Ascending aorta (tissue), 2 donors: ENCODE measurements at regions of chr12 and their contacts with region 1.

Region 1: GRCh38 chr12:116277393-116278278 is at the start of gene MED13L:
- DNase-seq: peak; percentile 46 to 93
- H3K4me3 ChIP-seq: peak within 1 kb of the TSS; percentile 89 to 95
- H3K27ac ChIP-seq: peak within 1 kb of the TSS; percentile 87 to 95
- H3K4me1 ChIP-seq: peaks cover 4 to 17% of the 10 kb centered on the region in 2 donors
- H3K27me3 ChIP-seq: no peaks in the 10 kb centered on the region
- CTCF ChIP-seq: peak; percentile 17 to 55 (median 39)
- total RNA-seq, gene MED13L: 117 TPM

Region 2: DNA sequence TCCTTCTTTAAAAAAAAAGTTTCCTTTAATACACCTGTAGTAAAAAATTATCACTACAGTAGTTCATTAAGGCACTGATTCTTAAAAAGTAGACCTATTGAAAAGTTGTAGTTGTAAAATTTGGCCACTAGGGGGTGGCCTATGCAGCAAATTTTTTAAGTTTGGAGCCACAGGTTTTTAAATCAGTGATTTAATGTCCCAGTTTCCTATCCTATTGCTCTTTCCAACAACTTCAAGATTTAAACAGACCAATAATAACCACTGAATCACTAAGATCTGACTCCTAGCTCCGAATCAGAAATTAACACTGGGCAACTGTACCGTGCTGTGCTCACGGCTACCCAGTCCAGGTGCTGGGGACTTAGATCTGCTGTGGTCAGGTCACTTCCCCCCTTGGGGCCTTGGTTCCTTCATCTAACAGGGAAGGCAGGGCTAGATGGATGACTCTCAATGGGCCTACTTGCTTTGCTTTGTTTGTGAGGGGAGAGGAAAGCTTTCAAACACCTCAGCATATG is 279.5 kb before region 1 on chr12:
- intact Hi-C with region 1: loop called (anchors 2 kb)
- DNase-seq: no peak
- H3K4me3 ChIP-seq: no peak overlapping the region
- H3K27ac ChIP-seq: peak overlapping the region in 1 of 2 donors; percentile 22
- H3K4me1 ChIP-seq: peaks cover 0 to 10% of the 10 kb centered on the region in 2 donors
- H3K27me3 ChIP-seq: no peaks in the 10 kb centered on the region
- CTCF ChIP-seq: peak; percentile 65 to 72 (median 69)

Region 3: GRCh38 chr12:116222358-116222757 is 55.3 kb before region 1 on chr12:
- intact Hi-C with region 1: no loop called
- DNase-seq: peak in 1 of 2 donors; percentile 88
- H3K4me3 ChIP-seq: no peak overlapping the region
- H3K27ac ChIP-seq: peak overlapping the region in 1 of 2 donors; percentile 5
- H3K4me1 ChIP-seq: peaks cover 5 to 42% of the 10 kb centered on the region in 2 donors
- H3K27me3 ChIP-seq: no peaks in the 10 kb centered on the region
- CTCF ChIP-seq: no peak

Region 4: DNA sequence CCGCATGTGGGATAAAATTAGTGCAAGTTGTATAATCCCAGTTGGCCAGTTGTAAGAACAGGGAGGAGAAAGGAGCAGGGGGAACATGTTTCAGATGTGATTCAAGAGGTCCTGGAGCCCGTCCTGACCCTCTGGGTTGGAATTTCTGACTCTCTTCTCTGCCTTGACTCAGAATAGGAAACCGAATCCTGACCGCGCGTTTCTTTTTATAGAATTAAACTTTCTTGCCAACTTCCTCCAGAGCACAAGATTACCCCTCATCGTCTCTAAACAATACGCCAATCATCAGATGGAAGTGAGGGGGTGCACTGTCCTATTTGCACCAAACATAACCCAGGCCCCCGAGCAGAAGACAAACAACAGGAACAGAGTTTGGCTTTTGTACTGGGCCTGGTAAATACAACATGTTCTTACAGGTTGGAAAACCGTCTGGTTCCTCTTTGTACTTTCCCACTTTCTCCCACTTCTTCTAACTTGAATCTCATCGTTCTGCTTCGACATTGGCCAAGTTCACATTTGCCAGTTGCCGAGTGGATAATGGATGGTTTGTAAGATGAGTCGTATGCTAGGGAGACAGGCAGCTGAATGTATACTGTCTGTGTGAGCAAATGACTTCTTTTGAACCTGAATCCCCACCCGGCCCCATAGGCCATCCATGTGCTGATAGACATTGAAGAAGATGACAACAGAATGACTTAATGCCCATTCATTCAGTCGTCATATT is 42.4 kb after region 1 on chr12:
- intact Hi-C with region 1: loop called (anchors 1 kb)
- DNase-seq: peak; percentile 53 to 95
- H3K4me3 ChIP-seq: peak overlapping the region; percentile 17 to 24
- H3K27ac ChIP-seq: peak overlapping the region; percentile 87 to 89
- H3K4me1 ChIP-seq: peaks cover 11 to 25% of the 10 kb centered on the region in 2 donors
- H3K27me3 ChIP-seq: no peaks in the 10 kb centered on the region
- CTCF ChIP-seq: no peak

Region 5: GRCh38 chr12:116406516-116406915 is 128.9 kb after region 1 on chr12:
- intact Hi-C with region 1: loop called (anchors 5 kb)
- DNase-seq: peak; percentile 84 to 97
- H3K4me3 ChIP-seq: no peak overlapping the region
- H3K27ac ChIP-seq: peak overlapping the region; percentile 34 to 60
- H3K4me1 ChIP-seq: peaks cover 8 to 36% of the 10 kb centered on the region in 2 donors
- H3K27me3 ChIP-seq: no peaks in the 10 kb centered on the region
- CTCF ChIP-seq: peak in 1 of 3 experiments; percentile 22

Region 6: GRCh38 chr12:116434155-116435011 is 156.7 kb after region 1 on chr12:
- intact Hi-C with region 1: loop called (anchors 1 kb)
- DNase-seq: peak; percentile 83 to 97
- H3K4me3 ChIP-seq: peak overlapping the region; percentile 24 to 56
- H3K27ac ChIP-seq: peak overlapping the region; percentile 67 to 74
- H3K4me1 ChIP-seq: peaks cover 4 to 12% of the 10 kb centered on the region in 2 donors
- H3K27me3 ChIP-seq: no peaks in the 10 kb centered on the region
- CTCF ChIP-seq: no peak

Region 7: DNA sequence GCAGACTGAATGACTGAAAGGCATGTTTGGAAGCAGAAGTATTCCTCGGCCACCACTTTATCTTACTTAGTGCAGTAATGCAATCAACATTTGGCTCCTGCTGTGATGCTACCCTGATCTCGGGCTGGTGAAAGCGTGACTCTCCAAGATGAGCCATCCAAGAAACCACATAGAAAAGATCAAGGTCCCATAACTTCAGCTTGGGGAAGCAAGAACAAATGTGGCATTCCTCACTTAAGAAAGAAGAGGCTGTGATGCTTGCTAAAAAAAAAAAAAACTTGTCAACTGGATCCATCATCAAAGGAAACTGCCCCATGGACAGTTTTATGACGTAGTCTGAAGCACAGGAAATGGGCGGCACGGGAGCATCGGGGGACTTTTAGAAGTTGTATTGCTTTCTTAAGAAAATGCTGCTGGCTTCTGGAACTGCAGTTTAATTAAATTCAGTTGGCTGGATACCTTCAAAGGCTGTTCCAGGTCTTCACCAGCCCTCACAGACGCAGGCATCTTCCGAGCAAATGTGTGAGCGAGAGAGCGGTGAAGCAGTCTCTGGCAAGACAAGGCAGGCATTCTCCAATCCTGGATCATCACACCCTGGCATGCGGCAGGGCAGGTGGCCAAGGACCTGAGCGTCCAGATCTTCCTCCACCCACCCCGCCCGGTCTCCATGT is 243.3 kb after region 1 on chr12:
- intact Hi-C with region 1: no loop called
- DNase-seq: no peak
- H3K4me3 ChIP-seq: no peak overlapping the region
- H3K27ac ChIP-seq: no peak overlapping the region
- H3K4me1 ChIP-seq: peaks cover 0 to 6% of the 10 kb centered on the region in 2 donors
- H3K27me3 ChIP-seq: no peaks in the 10 kb centered on the region
- CTCF ChIP-seq: no peak

Region 8: GRCh38 chr12:116533343-116534251 is 256.0 kb after region 1 on chr12:
- intact Hi-C with region 1: loop called (anchors 2 kb)
- DNase-seq: peak; percentile 30 to 85
- H3K4me3 ChIP-seq: peak overlapping the region; percentile 61 to 84
- H3K27ac ChIP-seq: peak overlapping the region; percentile 62 to 67
- H3K4me1 ChIP-seq: peaks cover 3 to 16% of the 10 kb centered on the region in 2 donors
- H3K27me3 ChIP-seq: no peaks in the 10 kb centered on the region
- CTCF ChIP-seq: no peak